Left cardiac atrium (tissue), 4 donors: ENCODE measurements at regions of chr4 and their contacts with region 1.

Region 1: DNA sequence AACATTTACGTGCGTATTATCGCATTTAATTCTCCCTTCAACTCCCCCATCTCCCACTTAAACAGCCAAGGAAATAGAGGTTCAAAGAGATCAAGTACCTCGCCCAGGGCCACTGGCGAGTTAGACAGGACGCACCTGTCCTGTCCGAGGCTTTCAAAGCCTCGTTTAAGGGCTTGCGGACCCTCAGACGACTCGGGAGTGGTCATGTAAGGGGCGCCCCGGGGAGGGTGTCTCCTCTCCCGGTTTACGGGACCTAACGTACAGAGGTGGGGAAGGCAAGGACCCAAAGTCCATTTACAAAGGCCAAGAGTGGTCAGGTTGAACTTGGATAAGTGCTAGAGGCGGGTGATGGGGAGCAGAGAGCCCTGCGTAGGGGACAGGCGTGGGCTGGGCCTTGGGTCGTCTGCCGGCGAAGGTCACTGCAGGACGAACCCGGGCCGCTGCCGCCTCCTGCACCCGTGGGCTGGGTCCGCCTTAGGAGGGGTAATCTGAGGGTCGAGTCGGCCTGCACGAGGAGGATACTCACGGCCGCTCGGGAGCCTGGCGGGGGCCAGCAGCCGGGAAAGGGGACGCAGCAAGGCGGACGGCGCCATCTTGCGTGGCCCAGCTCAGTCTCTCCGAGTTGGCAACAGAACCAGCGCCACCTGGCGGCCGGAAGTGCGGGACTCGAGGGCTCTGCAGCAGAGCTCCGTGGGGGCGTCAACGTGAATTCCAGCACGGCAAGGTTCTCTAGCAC is 5.9 kb upstream of the NAA15 start:
- DNase-seq: peak; percentile 98
- ATAC-seq: peak; percentile 97 to 98

Region 2: GRCh38 chr4:139108567-139109128 is 186.7 kb before region 1 on chr4:
- intact Hi-C with region 1: loop called in 1 of 2 experiments (anchors 10 kb)
- DNase-seq: no peak
- ATAC-seq: no peak

Region 3: GRCh38 chr4:139142087-139142486 is 153.3 kb before region 1 on chr4:
- intact Hi-C with region 1: no loop called
- DNase-seq: no peak
- ATAC-seq: no peak

Region 4: DNA sequence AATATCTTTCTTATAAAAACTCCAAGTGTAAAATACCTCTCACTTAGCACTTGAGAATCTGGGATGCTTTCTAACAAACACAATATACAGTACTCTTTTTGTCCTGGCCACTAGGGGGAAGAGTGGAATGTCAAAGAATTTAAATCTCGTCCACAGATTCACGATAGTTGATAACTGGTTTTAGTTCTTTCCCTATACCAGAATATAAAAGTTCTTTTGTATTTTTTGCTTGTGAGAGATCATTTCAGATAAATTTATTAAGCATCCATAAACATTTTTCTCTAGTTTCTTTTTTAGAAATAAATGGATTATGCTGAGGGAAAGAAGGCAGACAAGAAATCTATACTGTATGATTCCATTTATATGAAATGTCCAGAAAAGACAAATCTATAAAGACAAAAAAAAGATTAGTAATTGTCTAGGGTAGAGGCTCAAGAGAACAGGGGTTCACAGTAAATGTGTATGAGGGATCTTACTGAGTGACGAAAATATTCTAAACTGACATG is 65.8 kb before region 1 on chr4:
- intact Hi-C with region 1: loop called in 1 of 2 experiments (anchors 5 kb)
- DNase-seq: no peak
- ATAC-seq: peak; percentile 68 to 69